Naive thymus-derived CD4-positive, alpha-beta T cell (primary cell): ENCODE measurements at regions of chr9 and their contacts with region 1.

Region 1: DNA sequence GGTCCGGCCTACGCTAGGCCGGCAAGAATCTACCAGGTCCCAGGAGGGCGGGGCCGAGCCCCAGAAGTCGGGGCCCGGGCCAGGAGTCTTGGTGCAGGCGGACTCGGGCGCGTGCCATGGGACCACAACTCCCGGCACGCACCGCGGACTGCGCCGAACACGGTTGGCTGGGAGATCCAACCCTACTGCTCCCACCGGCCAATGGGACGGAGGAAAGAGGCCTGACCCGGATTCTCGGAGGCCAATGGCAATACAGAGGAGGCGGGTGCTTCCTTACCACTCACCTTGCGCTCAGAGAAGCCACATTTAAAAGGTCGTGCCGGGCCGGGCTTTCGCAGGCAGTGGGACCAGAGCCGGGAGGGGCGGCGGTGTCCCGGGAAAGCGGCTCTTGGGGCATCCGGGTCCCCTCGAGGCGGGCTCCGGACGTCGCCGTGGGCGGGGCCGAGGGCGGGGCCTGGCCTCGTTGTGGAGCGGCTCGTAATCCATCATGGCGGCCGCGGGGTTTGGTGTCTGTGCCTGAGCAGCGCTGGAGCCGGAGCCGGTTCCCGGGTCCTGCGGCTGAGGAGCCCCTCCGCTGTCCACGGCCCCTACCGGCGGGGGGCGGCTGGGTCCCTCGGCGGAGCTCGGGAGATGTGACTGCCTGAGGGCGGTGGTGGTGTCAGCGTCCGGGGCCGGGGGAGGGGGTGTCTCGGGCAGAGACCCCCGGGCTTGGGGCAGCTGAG is 19.1 kb downstream of the EXOSC2 start:
- DNase-seq: peak; percentile 92 to 97 (median 96)
- ATAC-seq: peak; percentile 98
- H3K4me3 ChIP-seq: peak overlapping the region; percentile 92
- H3K4me3 Mint-ChIP-seq: peak overlapping the region; percentile 90 to 99 (median 94)
- H3K27ac ChIP-seq: peak overlapping the region; percentile 99
- H3K27ac Mint-ChIP-seq: peak overlapping the region; percentile 91 to 97 (median 96)
- H3K4me1 ChIP-seq: peaks cover 22 to 31% of the 10 kb centered on the region in 2 donors
- H3K4me1 Mint-ChIP-seq: peaks cover 27 to 48% (median 37%) of the 10 kb centered on the region in 7 donors
- H3K27me3 ChIP-seq: no peaks in the 10 kb centered on the region
- H3K27me3 Mint-ChIP-seq: no peaks in the 10 kb centered on the region

Region 2: GRCh38 chr9:130320723-130321481 is 391.8 kb before region 1 on chr9:
- CTCF ChIA-PET with region 1: no interaction called
- POLR2A ChIA-PET with region 1: no interaction called
- intact Hi-C with region 1: no loop called
- DNase-seq: no peak
- ATAC-seq: no peak
- H3K4me3 ChIP-seq: no peak overlapping the region
- H3K4me3 Mint-ChIP-seq: no peak overlapping the region
- H3K27ac ChIP-seq: no peak overlapping the region
- H3K27ac Mint-ChIP-seq: peak overlapping the region in 1 of 9 donors; percentile 73
- H3K4me1 ChIP-seq: no peaks in the 10 kb centered on the region
- H3K4me1 Mint-ChIP-seq: peaks cover 0 to 3% (median 0%) of the 10 kb centered on the region in 7 donors
- H3K27me3 ChIP-seq: no peaks in the 10 kb centered on the region
- H3K27me3 Mint-ChIP-seq: peaks cover 15 to 60% (median 54%) of the 10 kb centered on the region in 5 donors

Region 3: GRCh38 chr9:130693426-130694191 is 19.1 kb before region 1 on chr9 and contains the start of gene EXOSC2:
- CTCF ChIA-PET with region 1: interaction called, 6 read pairs
- POLR2A ChIA-PET with region 1: interaction called, 18 read pairs
- intact Hi-C with region 1: loop called (anchors 1 kb)
- DNase-seq: peak; percentile 76 to 99 (median 89)
- ATAC-seq: peak; percentile 100
- H3K4me3 ChIP-seq: peak within 1 kb of the TSS; percentile 91
- H3K4me3 Mint-ChIP-seq: peak within 1 kb of the TSS; percentile 83 to 98 (median 95)
- H3K27ac ChIP-seq: peak within 1 kb of the TSS; percentile 85
- H3K27ac Mint-ChIP-seq: peak within 1 kb of the TSS; percentile 88 to 97 (median 94)
- H3K4me1 ChIP-seq: peaks cover 13 to 20% of the 10 kb centered on the region in 2 donors
- H3K4me1 Mint-ChIP-seq: peaks cover 20 to 54% (median 46%) of the 10 kb centered on the region in 7 donors
- H3K27me3 ChIP-seq: no peaks in the 10 kb centered on the region
- H3K27me3 Mint-ChIP-seq: no peaks in the 10 kb centered on the region
- total RNA-seq, gene EXOSC2: 44.2 to 60.7 (median 59.5) TPM

Region 4: DNA sequence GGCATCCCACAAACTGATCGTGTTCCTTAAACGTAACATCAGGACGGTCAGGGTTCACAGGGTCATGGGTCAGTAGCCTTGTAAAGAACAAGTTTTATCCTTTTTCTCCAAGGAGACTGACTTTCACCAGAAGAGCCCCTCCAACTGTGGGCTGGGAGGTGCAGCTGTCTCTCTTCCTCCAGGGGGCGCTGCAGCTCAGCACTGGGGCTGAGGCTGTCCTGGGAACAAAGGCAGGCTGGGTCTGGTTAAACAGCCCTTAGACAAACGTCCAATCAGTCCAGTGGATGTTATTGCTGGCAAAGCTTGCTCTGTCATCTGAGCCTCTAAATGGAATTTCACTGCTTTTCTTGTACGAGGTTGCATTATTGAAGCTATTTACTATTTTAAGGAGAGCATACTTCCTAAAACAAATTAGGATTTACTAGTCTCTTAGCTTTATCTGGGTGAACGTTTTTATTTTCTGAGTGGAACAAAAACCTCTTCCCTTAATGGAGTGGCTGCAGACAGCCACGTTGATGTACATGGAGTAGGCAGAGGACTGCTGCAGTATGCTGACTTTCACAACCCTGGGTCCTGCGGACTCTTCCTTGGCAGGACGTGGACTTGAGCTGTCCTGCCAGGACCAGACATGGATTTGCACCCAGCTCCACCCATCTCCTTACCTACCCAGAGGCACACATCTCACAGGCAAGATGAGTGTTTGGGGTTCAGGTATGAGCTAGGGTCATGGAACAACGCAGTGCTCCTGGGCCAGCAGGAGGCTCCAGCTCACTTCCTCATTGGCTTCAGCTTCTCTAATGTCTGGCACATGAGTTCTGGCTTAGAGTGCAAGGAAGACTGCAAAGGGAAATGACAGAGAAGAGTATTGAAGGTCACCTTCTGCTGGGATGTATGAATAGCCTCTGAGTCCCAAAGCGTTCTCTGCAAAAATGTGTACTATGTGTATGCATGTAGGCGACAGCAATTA is 11.4 kb before region 1 on chr9:
- CTCF ChIA-PET with region 1: interaction called, 7 read pairs
- POLR2A ChIA-PET with region 1: interaction called, 3 read pairs
- intact Hi-C with region 1: loop called in 1 of 2 experiments (anchors 1 kb)
- DNase-seq: peak; percentile 36 to 76 (median 63)
- ATAC-seq: peak; percentile 90
- H3K4me3 ChIP-seq: no peak overlapping the region
- H3K4me3 Mint-ChIP-seq: no peak overlapping the region
- H3K27ac ChIP-seq: no peak overlapping the region
- H3K27ac Mint-ChIP-seq: peak overlapping the region in 2 of 9 donors; percentile 12 to 48
- H3K4me1 ChIP-seq: peaks cover 0 to 1% of the 10 kb centered on the region in 2 donors
- H3K4me1 Mint-ChIP-seq: peaks cover 11 to 28% (median 17%) of the 10 kb centered on the region in 7 donors
- H3K27me3 ChIP-seq: no peaks in the 10 kb centered on the region
- H3K27me3 Mint-ChIP-seq: no peaks in the 10 kb centered on the region

Region 5: DNA sequence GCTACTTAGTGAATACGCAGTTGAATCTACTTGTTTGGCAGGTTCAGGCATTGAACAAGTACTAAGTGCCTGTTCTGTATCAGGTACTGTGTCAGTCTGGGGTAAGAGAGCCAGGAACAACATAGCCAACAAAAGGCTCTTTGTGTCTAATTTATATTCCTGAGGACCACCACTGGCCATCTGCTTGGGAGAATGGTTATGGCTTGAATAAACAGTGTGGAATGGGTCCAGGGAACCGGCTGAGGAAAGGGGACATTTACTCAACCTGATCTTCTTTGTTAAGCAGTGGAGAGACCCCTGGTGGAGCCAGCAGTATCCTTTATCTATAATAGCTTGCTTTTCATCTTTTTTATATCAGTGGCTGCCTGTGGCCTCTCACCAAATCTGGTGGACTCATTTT is 19.4 kb after region 1 on chr9:
- CTCF ChIA-PET with region 1: interaction called, 3 read pairs
- POLR2A ChIA-PET with region 1: interaction called, 10 read pairs
- intact Hi-C with region 1: loop called in 1 of 2 experiments (anchors 1 kb)
- DNase-seq: no peak
- ATAC-seq: no peak
- H3K4me3 ChIP-seq: no peak overlapping the region
- H3K4me3 Mint-ChIP-seq: no peak overlapping the region
- H3K27ac ChIP-seq: no peak overlapping the region
- H3K27ac Mint-ChIP-seq: no peak overlapping the region
- H3K4me1 ChIP-seq: no peaks in the 10 kb centered on the region
- H3K4me1 Mint-ChIP-seq: peaks cover 8 to 40% (median 22%) of the 10 kb centered on the region in 7 donors
- H3K27me3 ChIP-seq: no peaks in the 10 kb centered on the region
- H3K27me3 Mint-ChIP-seq: no peaks in the 10 kb centered on the region

Region 6: GRCh38 chr9:130834371-130835311 is 121.9 kb after region 1 on chr9 and contains the start of gene ABL1:
- CTCF ChIA-PET with region 1: no interaction called
- POLR2A ChIA-PET with region 1: no interaction called
- intact Hi-C with region 1: loop called (anchors 10 kb)
- DNase-seq: peak; percentile 37 to 66 (median 52)
- ATAC-seq: peak; percentile 89
- H3K4me3 ChIP-seq: peak within 1 kb of the TSS; percentile 79
- H3K4me3 Mint-ChIP-seq: peak within 1 kb of the TSS; percentile 92 to 99 (median 96)
- H3K27ac ChIP-seq: peak within 1 kb of the TSS; percentile 27
- H3K27ac Mint-ChIP-seq: peak within 1 kb of the TSS; percentile 79 to 96 (median 92)
- H3K4me1 ChIP-seq: peaks cover 0 to 19% of the 10 kb centered on the region in 2 donors
- H3K4me1 Mint-ChIP-seq: peaks cover 20 to 62% (median 51%) of the 10 kb centered on the region in 7 donors
- H3K27me3 ChIP-seq: no peaks in the 10 kb centered on the region
- H3K27me3 Mint-ChIP-seq: peaks cover 0 to 37% (median 0%) of the 10 kb centered on the region in 5 donors
- total RNA-seq, gene ABL1: 32.1 to 41.0 (median 39.5) TPM